ENCODE measurements at regions of chr2 and their contacts with region 1.

Region 1: GRCh38 chr2:174603280-174603679 is 5.7 kb upstream of the WIPF1 start:
- DNase-seq: peak; percentile 62
- H3K4me3 ChIP-seq: no peak overlapping the region
- H3K27ac ChIP-seq: no peak overlapping the region
- H3K4me1 ChIP-seq: peaks cover under 1% of the 10 kb centered on the region
- H3K27me3 ChIP-seq: no peaks in the 10 kb centered on the region
- CTCF ChIP-seq: peak; percentile 48 to 56
- POLR2A ChIP-seq: no peak

Region 2: DNA sequence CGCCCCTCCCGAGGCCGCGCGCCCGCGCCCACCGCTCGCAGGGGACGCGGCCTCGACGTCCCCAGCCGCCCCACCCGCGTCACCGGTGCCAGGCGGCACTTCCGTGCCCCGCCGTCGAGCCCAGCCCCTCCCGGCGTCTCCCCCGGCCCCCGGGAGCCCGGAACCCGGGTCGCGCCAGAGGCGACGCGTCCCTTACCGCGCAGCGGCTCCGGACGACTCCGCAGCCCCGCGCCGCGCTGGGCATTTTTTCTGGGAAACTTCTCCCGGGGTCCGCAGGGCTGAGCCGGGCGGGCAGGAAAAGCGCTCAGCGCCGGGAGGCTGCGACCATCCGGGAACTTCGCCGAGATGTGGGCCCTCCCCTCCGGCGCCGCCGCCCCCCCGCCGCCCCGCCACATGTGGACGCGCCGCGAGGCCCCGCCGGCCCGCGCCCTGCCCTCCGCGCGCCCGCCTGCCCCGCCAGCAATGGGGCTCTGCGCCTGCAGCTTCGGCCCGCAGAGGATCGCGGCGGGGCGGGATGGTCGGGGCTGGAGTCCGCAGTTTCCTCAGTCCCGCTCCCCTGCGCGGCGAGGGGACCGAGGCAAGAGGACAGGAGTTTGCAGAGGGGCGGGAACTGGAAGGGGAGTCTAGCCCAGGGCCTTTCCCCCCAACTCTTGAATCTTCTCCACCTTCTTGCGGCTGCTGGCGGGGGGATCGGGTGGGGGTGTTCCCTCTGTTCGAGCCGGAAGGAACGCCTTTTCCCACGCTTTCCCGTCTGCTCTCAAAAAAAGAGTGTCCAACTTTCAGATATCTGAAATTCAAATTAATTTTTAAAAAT is 79.5 kb after region 1 on chr2:
- CTCF ChIA-PET with region 1: interaction called, 28 read pairs
- POLR2A ChIA-PET with region 1: no interaction called
- dilution Hi-C with region 1: no loop called
- intact Hi-C with region 1: loop called (anchors 2 kb)
- DNase-seq: peak; percentile 55
- H3K4me3 ChIP-seq: peak overlapping the region; percentile 91 to 94 (median 93)
- H3K27ac ChIP-seq: peak overlapping the region; percentile 32
- H3K4me1 ChIP-seq: peaks cover 16% of the 10 kb centered on the region
- H3K27me3 ChIP-seq: peaks cover 3 to 5% of the 10 kb centered on the region in 2 experiments
- CTCF ChIP-seq: no peak
- POLR2A ChIP-seq: no peak

Region 3: DNA sequence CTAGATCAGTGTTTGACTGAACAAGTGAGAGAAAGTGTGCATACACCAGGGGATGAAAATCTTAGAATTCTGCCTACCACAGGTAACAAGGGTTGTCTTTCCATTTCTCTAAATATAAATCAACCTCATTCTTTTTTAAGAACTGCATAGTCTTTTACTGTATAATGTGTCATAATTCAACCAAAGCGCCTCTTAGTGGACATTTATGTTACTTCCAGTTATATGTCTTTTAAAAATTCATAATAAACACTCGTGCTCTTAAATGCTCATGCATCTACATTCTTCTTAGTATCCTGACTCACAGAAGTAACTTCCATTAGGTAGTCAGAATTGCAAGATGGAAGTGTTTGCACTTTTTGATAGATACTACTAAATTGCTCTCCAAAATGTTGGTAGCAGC is 84.8 kb after region 1 on chr2:
- CTCF ChIA-PET with region 1: interaction called, 28 read pairs
- POLR2A ChIA-PET with region 1: no interaction called
- dilution Hi-C with region 1: no loop called
- intact Hi-C with region 1: loop called (anchors 1 kb)
- DNase-seq: peak; percentile 53
- H3K4me3 ChIP-seq: no peak overlapping the region
- H3K27ac ChIP-seq: no peak overlapping the region
- H3K4me1 ChIP-seq: peaks cover 8% of the 10 kb centered on the region
- H3K27me3 ChIP-seq: peaks cover 3 to 10% of the 10 kb centered on the region in 2 experiments
- CTCF ChIP-seq: peak in 1 of 2 donors; percentile 15
- POLR2A ChIP-seq: no peak